H1 (cell line): ENCODE measurements at regions of chr11 and their contacts with region 1.

Region 1: DNA sequence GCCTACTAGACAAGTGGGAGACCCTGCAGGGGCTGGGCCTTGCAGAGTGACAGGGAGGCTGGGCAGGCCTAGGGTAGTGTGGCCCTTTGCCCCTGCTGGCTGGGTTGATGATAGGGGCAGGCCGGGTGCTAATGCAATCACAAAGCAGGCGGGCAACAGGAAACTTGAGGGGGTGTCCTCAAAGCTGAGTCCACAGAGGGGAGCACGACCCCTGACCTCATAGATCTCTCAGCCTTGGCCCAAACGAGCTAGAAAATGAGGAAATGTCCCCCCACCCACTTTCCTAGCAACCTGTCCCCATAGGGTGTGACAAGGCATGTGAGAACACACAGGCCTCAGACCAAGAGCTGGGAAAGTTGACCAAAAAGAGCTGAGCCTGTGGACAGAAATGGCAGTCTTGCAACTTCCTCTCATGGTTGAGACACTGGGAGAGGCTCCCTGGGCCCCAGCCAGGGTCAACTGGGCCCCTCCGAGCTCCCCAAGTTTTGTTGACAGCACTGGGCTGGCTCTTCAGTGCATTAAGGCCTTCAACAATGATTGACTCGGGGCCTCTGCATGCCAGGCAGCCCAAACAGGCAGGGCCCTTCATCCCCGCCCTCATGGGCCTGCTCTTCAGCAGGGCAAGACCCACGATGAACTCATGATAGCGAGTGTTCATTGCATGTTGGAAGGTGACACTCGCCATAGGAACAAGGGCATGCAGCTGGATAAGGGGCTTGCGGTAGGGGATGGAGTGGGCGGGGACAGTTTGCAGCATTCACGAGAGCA is 9.7 kb upstream of the SPI1 start:
- DNase-seq: no peak
- H3K4me3 ChIP-seq: no peak overlapping the region
- H3K27ac ChIP-seq: no peak overlapping the region; the same call in 1 of the 2 replicates
- H3K4me1 ChIP-seq: peaks cover 0 to 3% (median 0%) of the 10 kb centered on the region in 4 experiments; a peak in 2 of 7 replicates
- H3K27me3 ChIP-seq: no peaks in the 10 kb centered on the region
- CTCF ChIP-seq: no peak
- EP300 ChIP-seq: no peak
- POLR2A ChIP-seq: no peak
- RAD21 ChIP-seq: no peak

Region 2: DNA sequence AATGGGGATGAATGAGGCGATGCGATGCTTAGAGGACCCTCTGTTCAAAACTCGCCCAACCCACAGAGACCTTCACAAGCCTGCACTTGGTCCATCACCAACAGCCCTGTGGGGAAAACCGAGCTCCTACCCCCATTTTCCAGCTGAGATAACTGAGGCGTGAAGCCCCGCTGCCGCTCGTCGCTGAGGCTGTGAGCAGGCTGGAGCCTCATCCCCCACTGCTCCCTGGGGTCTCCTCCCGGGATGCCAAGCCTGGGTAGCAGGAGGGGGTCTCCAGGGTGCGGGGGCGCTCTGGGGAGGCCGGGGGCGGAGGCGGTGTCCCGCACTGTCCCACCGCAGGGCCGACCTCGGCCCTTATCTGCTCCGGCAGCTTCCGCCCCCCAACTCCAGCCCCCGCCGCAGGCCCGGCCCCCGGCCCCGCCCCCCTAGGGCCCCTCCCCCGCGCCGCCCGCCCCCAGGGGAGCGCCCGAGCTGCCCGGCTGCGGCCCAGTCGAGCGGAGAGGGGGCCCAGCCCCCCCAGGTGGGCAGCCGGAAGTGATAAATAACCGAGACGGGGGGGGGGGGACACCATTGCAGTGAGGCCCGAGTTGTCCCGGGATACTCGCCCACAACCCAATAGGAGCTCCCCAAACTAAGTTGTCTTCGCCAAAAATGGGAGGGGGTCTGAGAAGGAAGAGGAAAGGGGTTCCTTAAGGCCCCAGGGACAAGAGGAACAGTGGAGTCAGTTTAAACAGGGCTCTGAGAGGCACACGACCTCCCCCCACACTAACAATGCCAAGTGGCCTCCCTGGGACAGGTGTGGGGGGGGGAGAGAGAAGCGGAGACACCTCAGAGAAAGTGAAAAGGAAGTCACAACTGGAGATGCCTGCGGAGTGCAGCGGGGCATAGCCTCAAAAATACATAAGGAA is 12.0 kb after region 1 on chr11:
- CTCF ChIA-PET with region 1: interaction called, 13 read pairs
- POLR2A ChIA-PET with region 1: interaction called, 29 read pairs
- DNase-seq: no peak
- H3K4me3 ChIP-seq: peak overlapping the region; percentile 34 to 58 (median 46)
- H3K27ac ChIP-seq: peak overlapping the region; percentile 35; the same call in 1 of the 2 replicates
- H3K4me1 ChIP-seq: peaks cover 7 to 17% (median 7%) of the 10 kb centered on the region in 4 experiments
- H3K27me3 ChIP-seq: no peaks in the 10 kb centered on the region
- CTCF ChIP-seq: no peak
- EP300 ChIP-seq: no peak
- POLR2A ChIP-seq: peak in 1 of 2 experiments; percentile 32; a peak in 1 of 3 replicates
- RAD21 ChIP-seq: no peak